ENCODE measurements at regions of chr16 and their contacts with region 1.

Region 1: DNA sequence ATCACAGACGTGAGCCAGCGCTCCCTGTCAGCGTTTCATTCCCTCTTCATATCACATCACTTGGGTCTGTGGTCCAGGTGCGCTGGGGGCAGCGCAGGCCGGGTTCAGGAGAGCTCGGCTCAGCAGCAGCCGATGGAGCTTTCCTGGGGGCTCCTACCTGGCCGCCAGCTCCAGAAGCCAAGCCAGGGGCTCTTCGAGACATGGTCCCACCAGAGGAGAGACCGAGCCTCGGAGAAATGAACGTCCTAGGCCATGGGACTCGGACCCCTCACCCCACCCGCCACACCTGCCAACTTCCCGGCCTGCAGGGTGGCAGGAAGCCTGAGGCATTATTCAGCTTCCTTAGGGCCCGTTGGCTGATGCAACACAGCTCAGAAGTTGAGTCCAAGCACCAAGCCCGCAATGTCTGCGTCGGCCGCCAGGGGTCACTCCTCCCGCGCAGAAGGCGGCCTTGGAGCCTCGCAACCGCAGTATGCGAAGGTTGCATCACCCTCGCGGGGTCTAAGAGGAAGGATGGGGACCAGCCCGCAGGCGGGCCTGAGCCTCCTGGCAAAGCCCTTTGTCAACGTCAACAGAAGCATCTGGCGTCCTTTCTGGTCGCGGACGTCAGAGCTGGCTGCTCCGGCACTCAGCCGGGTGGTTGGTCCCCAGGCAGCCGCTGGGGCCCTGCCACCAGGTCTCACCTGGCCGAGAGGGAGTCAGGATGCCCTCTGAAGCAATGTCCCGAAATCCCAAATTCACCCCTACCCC is 13.2 kb upstream of the KLHDC4 start:
- DNase-seq: peak; percentile 94
- ATAC-seq: peak; percentile 70
- H3K4me3 ChIP-seq: peak overlapping the region in 1 of 2 experiments; percentile 15; a peak in 1 of 4 replicates
- H3K27ac ChIP-seq: peak overlapping the region; percentile 72
- H3K4me1 ChIP-seq: peaks cover 14 to 44% of the 10 kb centered on the region in 2 experiments; a peak in 3 of 4 replicates
- H3K27me3 ChIP-seq: no peaks in the 10 kb centered on the region
- CTCF ChIP-seq: peak in 2 of 3 experiments; percentile 88 to 94; a peak in 4 of 6 replicates
- POLR2A ChIP-seq: no peak
- RAD21 ChIP-seq: no peak

Region 2: DNA sequence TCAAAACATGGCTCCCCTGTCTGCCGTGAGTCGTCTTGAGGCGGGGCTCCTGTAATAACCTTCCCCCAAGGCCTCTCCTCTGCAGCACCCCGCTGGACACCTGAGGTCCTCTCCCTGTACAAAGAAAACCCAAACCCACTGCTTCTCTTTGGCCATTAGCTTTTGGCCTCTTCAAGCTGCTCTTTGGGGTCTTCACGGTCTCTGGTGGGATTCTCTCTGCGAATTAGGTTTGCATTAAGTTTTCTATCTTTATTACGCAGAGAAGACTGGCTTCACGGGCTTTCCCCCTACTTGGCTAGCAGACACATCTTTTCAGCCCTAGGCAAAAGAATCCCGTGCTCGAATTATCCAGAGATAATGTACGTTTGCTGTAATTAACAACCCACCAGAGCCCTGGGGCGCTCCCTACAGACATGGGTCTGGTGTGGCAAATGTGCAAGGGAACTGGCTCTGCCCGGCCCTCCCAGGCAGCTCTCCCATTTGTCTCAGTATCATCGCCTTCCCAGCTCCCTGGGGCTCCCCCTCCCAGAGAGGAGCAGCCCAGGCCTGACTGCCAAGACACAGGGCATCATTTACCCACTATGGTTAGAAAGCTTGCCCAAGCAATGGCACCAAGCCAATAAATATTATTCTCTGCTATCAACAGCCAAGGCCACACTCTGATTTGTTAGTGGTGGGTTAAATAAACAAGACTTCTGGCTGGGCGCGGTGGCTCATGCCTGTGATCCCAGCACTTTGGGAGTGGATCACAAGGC is 11.4 kb after region 1 on chr16:
- CTCF ChIA-PET with region 1: interaction called, 18 read pairs
- POLR2A ChIA-PET with region 1: interaction called, 4 read pairs
- RAD21 ChIA-PET with region 1: interaction called in 1 of 2 experiments, 3 read pairs
- intact Hi-C with region 1: no loop called
- DNase-seq: no peak
- ATAC-seq: 0 out of 2 replicates have a peak, but pooled peaks have one; percentile 15
- H3K4me3 ChIP-seq: no peak overlapping the region
- H3K27ac ChIP-seq: no peak overlapping the region
- H3K4me1 ChIP-seq: peaks cover 4 to 16% of the 10 kb centered on the region in 2 experiments; a peak in 3 of 4 replicates
- H3K27me3 ChIP-seq: no peaks in the 10 kb centered on the region
- CTCF ChIP-seq: no peak
- POLR2A ChIP-seq: no peak
- RAD21 ChIP-seq: no peak

Region 3: GRCh38 chr16:87821376-87822107 is 42.5 kb after region 1 on chr16:
- CTCF ChIA-PET with region 1: no interaction called
- POLR2A ChIA-PET with region 1: no interaction called
- RAD21 ChIA-PET with region 1: no interaction called
- intact Hi-C with region 1: no loop called
- DNase-seq: no peak
- ATAC-seq: no peak
- H3K4me3 ChIP-seq: no peak overlapping the region
- H3K27ac ChIP-seq: no peak overlapping the region
- H3K4me1 ChIP-seq: peaks cover 0 to 4% of the 10 kb centered on the region in 2 experiments; a peak in 1 of 4 replicates
- H3K27me3 ChIP-seq: peaks cover 5% of the 10 kb centered on the region; the same call in 1 of the 2 replicates
- CTCF ChIP-seq: no peak
- POLR2A ChIP-seq: no peak
- RAD21 ChIP-seq: no peak

Region 4: DNA sequence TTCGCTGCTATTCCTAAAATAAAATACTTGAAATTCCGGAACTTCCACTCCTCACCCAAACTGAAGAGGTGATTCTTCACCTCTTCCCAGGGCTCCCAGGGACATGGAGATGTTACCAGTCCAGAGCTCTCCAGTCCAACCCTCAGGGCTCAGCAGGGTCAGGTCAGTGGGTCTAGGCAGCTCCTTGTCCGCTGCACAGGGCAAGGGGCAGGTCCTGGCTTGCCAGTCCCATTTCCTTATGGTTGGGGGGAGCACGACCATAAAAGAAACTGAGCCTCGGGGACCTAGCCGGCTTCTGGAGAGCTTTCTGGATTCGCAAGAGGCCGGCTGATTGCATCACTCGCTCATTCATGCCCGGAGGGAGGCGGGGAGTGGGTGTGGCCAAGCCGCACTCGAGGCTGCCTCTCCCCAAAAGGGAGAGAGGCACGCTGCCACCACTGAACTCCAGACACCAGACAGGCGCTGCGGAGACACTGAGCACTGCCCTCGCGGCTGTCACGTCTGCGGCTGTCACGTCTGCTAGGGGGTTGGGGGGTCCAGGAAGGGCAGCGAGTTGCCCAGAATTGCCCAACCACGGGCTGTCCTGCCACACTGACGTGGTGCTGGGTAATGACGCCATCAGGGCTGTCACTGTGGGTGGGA is 74.5 kb after region 1 on chr16:
- CTCF ChIA-PET with region 1: interaction called, 27 read pairs
- POLR2A ChIA-PET with region 1: interaction called, 3 read pairs
- RAD21 ChIA-PET with region 1: interaction called, 3 to 5 read pairs
- intact Hi-C with region 1: no loop called
- DNase-seq: peak; percentile 79
- ATAC-seq: peak; percentile 78
- H3K4me3 ChIP-seq: peak overlapping the region; percentile 0 to 23; a peak in 2 of 4 replicates
- H3K27ac ChIP-seq: peak overlapping the region; percentile 81
- H3K4me1 ChIP-seq: peaks cover 32 to 38% of the 10 kb centered on the region in 2 experiments
- H3K27me3 ChIP-seq: no peaks in the 10 kb centered on the region
- CTCF ChIP-seq: no peak
- POLR2A ChIP-seq: peak; percentile 54
- RAD21 ChIP-seq: no peak

Region 5: GRCh38 chr16:87950765-87951549 is 172.0 kb after region 1 on chr16 and contains the start of gene BANP:
- CTCF ChIA-PET with region 1: interaction called, 9 read pairs
- POLR2A ChIA-PET with region 1: no interaction called
- RAD21 ChIA-PET with region 1: no interaction called
- intact Hi-C with region 1: loop called (anchors 2 kb)
- DNase-seq: peak; percentile 100
- ATAC-seq: peak; percentile 94
- H3K4me3 ChIP-seq: peak within 1 kb of the TSS; percentile 79 to 99
- H3K27ac ChIP-seq: peak within 1 kb of the TSS; percentile 97
- H3K4me1 ChIP-seq: peaks cover 26 to 34% of the 10 kb centered on the region in 2 experiments
- H3K27me3 ChIP-seq: no peaks in the 10 kb centered on the region
- CTCF ChIP-seq: peak in 2 of 3 experiments; percentile 55 to 92; a peak in 4 of 6 replicates
- POLR2A ChIP-seq: no peak
- RAD21 ChIP-seq: no peak
- total RNA-seq, gene BANP: 37.2 TPM

Region 6: GRCh38 chr16:88561485-88562369 is 782.7 kb after region 1 on chr16:
- CTCF ChIA-PET with region 1: interaction called, 3 read pairs
- POLR2A ChIA-PET with region 1: no interaction called
- RAD21 ChIA-PET with region 1: no interaction called
- intact Hi-C with region 1: loop called (anchors 1 kb)
- DNase-seq: peak; percentile 36
- ATAC-seq: peak; percentile 76
- H3K4me3 ChIP-seq: peak overlapping the region; percentile 28 to 45
- H3K27ac ChIP-seq: no peak overlapping the region; the same call in 1 of the 2 replicates
- H3K4me1 ChIP-seq: peaks cover 10 to 34% of the 10 kb centered on the region in 2 experiments; a peak in 3 of 4 replicates
- H3K27me3 ChIP-seq: no peaks in the 10 kb centered on the region
- CTCF ChIP-seq: peak; percentile 73 to 85 (median 79)
- POLR2A ChIP-seq: no peak
- RAD21 ChIP-seq: peak; percentile 85

Measured in HCT116 (cell line).